Ascending aorta (tissue), 2 donors: ENCODE measurements at regions of chr1 and their contacts with region 1.

Region 1: DNA sequence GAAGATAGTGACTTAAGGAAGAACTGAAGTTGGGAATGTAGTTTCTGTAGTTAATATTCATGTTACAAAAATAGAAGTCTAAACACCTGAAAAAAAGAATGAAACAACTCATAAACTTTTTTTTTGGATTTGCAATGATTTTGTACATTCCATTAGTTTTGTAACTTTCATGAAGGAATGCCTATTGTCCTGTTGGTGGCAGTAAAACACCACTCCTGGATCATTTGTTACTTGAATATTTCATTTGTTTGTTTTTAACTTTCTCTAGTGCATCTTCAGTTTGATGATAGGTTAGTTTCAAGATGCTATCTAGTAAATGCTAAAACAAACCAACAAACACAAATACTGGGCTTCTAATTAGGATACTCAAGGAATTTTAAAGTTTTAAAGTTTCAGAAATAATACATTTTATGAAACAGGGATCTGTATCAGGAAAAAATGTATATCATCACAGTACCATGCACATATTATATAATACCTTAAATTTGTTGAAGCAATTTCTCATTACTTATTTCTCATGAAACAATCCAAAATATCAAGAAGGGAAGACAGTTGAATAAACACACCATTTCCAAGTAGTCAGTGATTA is 229.7 kb upstream of the CACYBP start:
- DNase-seq: no peak
- H3K4me3 ChIP-seq: no peak overlapping the region
- H3K27ac ChIP-seq: no peak overlapping the region
- H3K4me1 ChIP-seq: no peaks in the 10 kb centered on the region
- H3K27me3 ChIP-seq: no peaks in the 10 kb centered on the region
- CTCF ChIP-seq: peak; percentile 54 to 74 (median 63)

Region 2: DNA sequence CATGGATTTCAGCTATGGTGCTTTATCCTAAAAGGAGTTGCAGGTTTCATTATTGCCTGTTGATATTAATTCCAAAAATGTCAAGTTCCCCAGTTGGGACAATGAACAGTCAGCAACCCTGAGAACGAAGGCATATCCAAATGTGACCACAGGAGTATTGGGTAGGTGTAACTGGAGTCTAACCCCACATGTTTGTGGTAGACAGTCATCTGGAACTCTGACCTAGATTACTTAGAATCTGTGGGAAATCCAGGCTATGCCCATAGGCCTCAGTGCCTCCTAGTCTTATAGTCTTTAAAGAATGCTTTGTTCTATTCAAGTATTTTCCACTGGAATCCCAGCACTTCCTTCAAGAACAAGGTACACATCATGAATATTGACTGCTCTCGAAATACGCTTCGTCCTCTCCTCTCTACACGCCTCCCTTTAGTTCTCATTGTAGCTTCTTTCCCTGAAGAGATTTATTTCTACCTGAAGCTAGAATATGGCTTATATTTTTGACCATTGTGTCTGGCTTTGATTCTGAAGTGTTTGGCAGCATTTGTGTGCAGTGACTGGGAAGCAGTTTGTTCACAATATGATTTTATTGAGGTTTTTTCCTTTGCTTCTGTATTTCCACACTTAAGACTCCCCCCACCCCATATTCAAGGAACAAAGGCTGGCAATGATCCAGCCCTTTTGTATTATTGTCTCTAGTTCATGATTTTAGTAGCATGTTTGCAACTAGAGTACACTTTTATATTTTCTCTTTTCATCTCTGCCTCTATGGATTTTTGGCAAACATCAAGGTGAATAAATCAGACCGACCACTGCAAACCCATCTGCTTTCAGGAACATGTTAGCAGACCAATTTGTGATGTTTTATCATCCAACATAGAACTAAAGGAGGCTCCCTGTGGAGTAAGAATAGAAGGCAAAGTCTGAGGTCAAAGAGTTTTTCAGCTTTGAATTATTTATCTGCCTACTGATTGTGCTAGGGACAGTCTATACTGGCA is 143.7 kb before region 1 on chr1:
- intact Hi-C with region 1: no loop called
- DNase-seq: no peak
- H3K4me3 ChIP-seq: no peak overlapping the region
- H3K27ac ChIP-seq: no peak overlapping the region
- H3K4me1 ChIP-seq: no peaks in the 10 kb centered on the region
- H3K27me3 ChIP-seq: no peaks in the 10 kb centered on the region
- CTCF ChIP-seq: no peak

Region 3: GRCh38 chr1:174982971-174983689 is 213.1 kb after region 1 on chr1:
- intact Hi-C with region 1: loop called (anchors 1 kb)
- DNase-seq: no peak
- H3K4me3 ChIP-seq: no peak overlapping the region
- H3K27ac ChIP-seq: no peak overlapping the region
- H3K4me1 ChIP-seq: no peaks in the 10 kb centered on the region
- H3K27me3 ChIP-seq: no peaks in the 10 kb centered on the region
- CTCF ChIP-seq: peak; percentile 45 to 62 (median 49)

Region 4: GRCh38 chr1:175129997-175130648 is 360.1 kb after region 1 on chr1:
- intact Hi-C with region 1: loop called (anchors 10 kb)
- DNase-seq: no peak
- H3K4me3 ChIP-seq: no peak overlapping the region
- H3K27ac ChIP-seq: no peak overlapping the region
- H3K4me1 ChIP-seq: peaks cover 0 to 7% of the 10 kb centered on the region in 2 donors
- H3K27me3 ChIP-seq: no peaks in the 10 kb centered on the region
- CTCF ChIP-seq: no peak